ENCODE measurements at regions of chr7 and their contacts with region 1.

Region 1: GRCh38 chr7:30348083-30348560 is 63.7 kb downstream of the ZNRF2 start:
- DNase-seq: peak in 13 of 14 experiments; percentile 12 to 93 (median 35)
- ATAC-seq: peak; percentile 88
- H3K4me3 ChIP-seq: peak overlapping the region; percentile 24
- H3K4me3 Mint-ChIP-seq: peak overlapping the region; percentile 31
- H3K27ac ChIP-seq: peak overlapping the region; percentile 7 to 20
- H3K27ac Mint-ChIP-seq: peak overlapping the region; percentile 93
- H3K4me1 ChIP-seq: peaks cover 14% of the 10 kb centered on the region
- H3K4me1 Mint-ChIP-seq: peaks cover 64% of the 10 kb centered on the region
- H3K27me3 ChIP-seq: no peaks in the 10 kb centered on the region
- H3K27me3 Mint-ChIP-seq: no peaks in the 10 kb centered on the region
- CTCF ChIP-seq: no peak

Region 2: GRCh38 chr7:30134611-30135545 is 213.2 kb before region 1 on chr7 and contains the start of gene MTURN:
- CTCF ChIA-PET with region 1: no interaction called
- POLR2A ChIA-PET with region 1: interaction called, 6 read pairs
- intact Hi-C with region 1: loop called in 1 of 2 experiments (anchors 10 kb)
- DNase-seq: peak; percentile 64 to 96 (median 83)
- ATAC-seq: peak; percentile 76
- H3K4me3 ChIP-seq: peak within 1 kb of the TSS; percentile 94
- H3K4me3 Mint-ChIP-seq: peak within 1 kb of the TSS; percentile 94
- H3K27ac ChIP-seq: no peak within 1 kb of the TSS
- H3K27ac Mint-ChIP-seq: peak within 1 kb of the TSS; percentile 89
- H3K4me1 ChIP-seq: peaks cover 20% of the 10 kb centered on the region
- H3K4me1 Mint-ChIP-seq: peaks cover 20% of the 10 kb centered on the region
- H3K27me3 ChIP-seq: no peaks in the 10 kb centered on the region
- H3K27me3 Mint-ChIP-seq: peaks cover 6% of the 10 kb centered on the region
- CTCF ChIP-seq: no peak
- total RNA-seq, gene MTURN: 38.4 to 38.9 TPM

Region 3: DNA sequence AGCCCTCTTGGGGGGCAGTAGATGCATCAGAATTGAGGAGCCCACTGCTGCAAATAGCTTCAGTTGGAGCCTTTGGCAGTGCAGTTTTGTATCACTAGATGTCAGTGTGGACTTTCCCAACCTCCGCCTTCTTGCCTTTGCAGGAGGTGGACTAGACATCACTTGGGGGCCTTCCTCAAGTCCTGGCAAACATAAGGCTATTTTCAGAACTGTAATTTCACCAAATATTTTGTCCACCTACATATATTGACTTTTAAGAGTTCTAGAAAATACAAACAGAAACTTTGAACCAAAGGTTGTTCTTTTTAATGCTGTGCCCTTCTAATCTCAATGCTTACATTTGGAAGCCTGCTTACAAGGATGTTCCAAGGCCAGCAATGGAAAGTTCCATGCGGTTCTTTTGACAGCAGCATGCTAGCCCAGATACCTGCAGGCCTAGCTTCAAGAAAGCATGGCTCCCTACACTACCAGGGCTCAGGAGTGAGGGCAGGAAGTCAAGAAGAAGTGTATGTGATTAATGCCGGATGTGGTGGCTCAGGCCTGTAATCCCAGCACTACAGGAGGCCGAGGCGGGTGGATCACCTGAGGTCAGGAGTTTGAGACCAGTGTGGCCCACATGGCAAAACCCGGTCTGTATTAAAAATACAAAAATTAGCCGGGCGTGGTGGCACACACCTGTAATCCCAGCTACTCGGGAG is 71.8 kb before region 1 on chr7:
- CTCF ChIA-PET with region 1: interaction called, 10 read pairs
- POLR2A ChIA-PET with region 1: interaction called, 7 read pairs
- intact Hi-C with region 1: loop called (anchors 2 kb)
- DNase-seq: peak; percentile 33 to 78 (median 40)
- ATAC-seq: peak; percentile 86
- H3K4me3 ChIP-seq: no peak overlapping the region
- H3K4me3 Mint-ChIP-seq: no peak overlapping the region
- H3K27ac ChIP-seq: no peak overlapping the region
- H3K27ac Mint-ChIP-seq: no peak overlapping the region
- H3K4me1 ChIP-seq: peaks cover 6% of the 10 kb centered on the region
- H3K4me1 Mint-ChIP-seq: no peaks in the 10 kb centered on the region
- H3K27me3 ChIP-seq: no peaks in the 10 kb centered on the region
- H3K27me3 Mint-ChIP-seq: no peaks in the 10 kb centered on the region
- CTCF ChIP-seq: peak; percentile 75

Region 4: GRCh38 chr7:30308389-30308788 is 39.7 kb before region 1 on chr7:
- CTCF ChIA-PET with region 1: interaction called, 4 read pairs
- POLR2A ChIA-PET with region 1: interaction called, 3 read pairs
- intact Hi-C with region 1: loop called in 1 of 2 experiments (anchors 5 kb)
- DNase-seq: peak in 1 of 14 experiments; percentile 20
- ATAC-seq: no peak
- H3K4me3 ChIP-seq: no peak overlapping the region
- H3K4me3 Mint-ChIP-seq: no peak overlapping the region
- H3K27ac ChIP-seq: no peak overlapping the region
- H3K27ac Mint-ChIP-seq: no peak overlapping the region
- H3K4me1 ChIP-seq: peaks cover 6% of the 10 kb centered on the region
- H3K4me1 Mint-ChIP-seq: peaks cover 80% of the 10 kb centered on the region
- H3K27me3 ChIP-seq: no peaks in the 10 kb centered on the region
- H3K27me3 Mint-ChIP-seq: no peaks in the 10 kb centered on the region
- CTCF ChIP-seq: no peak

Region 5: DNA sequence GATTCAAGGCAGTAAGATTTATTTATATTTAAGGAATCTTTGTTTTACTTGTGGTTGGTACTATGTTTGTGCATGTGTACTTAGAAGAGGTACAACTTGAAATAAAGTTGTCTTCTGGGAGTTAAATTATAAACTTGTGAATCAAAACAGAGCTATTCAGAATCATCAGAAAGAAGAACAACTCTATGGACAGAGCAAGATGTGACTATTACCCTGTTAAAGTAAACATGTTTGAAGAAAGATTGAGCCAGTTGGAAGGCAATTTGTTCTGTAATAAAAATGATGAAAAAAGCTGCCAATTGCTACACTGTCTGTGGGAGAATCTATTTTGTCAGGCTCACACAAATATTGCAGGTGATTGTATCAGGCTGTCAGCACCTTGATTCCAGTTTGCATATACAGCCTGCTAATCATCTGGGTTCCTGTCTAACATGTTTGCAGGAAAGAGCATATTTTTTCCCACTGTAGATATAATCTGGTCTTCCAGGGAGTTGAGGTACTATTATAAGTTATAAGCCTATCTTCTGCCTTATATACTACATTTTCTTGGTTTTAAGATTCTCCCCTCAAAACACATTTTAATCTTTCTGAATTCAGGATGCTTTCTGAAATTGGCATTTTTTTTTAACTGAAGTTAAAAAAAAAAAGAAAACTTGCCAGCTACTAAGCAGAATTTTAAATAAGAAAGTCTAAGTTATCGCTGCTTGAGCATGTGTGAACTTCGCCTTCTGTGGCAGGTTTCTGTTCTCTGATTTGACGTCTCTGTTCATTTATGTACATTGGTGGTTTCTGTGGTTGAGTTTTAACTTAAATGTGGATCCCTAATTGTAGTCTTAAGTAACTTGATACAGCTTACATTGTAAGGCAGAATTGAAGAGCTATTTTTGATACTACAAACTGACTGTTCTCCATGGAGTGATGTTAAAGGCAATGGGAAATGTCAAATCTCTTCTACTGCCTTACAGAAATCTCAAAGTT is 17.7 kb before region 1 on chr7:
- CTCF ChIA-PET with region 1: interaction called, 4 read pairs
- POLR2A ChIA-PET with region 1: interaction called, 14 read pairs
- intact Hi-C with region 1: loop called (anchors 1 to 2 kb)
- DNase-seq: peak in 6 of 14 experiments; percentile 13 to 88 (median 52)
- ATAC-seq: peak; percentile 89
- H3K4me3 ChIP-seq: peak overlapping the region; percentile 11
- H3K4me3 Mint-ChIP-seq: peak overlapping the region; percentile 48
- H3K27ac ChIP-seq: peak overlapping the region in 1 of 2 donors; percentile 12
- H3K27ac Mint-ChIP-seq: peak overlapping the region; percentile 60
- H3K4me1 ChIP-seq: peaks cover 3% of the 10 kb centered on the region
- H3K4me1 Mint-ChIP-seq: peaks cover 72% of the 10 kb centered on the region
- H3K27me3 ChIP-seq: no peaks in the 10 kb centered on the region
- H3K27me3 Mint-ChIP-seq: no peaks in the 10 kb centered on the region
- CTCF ChIP-seq: no peak

Region 6: DNA sequence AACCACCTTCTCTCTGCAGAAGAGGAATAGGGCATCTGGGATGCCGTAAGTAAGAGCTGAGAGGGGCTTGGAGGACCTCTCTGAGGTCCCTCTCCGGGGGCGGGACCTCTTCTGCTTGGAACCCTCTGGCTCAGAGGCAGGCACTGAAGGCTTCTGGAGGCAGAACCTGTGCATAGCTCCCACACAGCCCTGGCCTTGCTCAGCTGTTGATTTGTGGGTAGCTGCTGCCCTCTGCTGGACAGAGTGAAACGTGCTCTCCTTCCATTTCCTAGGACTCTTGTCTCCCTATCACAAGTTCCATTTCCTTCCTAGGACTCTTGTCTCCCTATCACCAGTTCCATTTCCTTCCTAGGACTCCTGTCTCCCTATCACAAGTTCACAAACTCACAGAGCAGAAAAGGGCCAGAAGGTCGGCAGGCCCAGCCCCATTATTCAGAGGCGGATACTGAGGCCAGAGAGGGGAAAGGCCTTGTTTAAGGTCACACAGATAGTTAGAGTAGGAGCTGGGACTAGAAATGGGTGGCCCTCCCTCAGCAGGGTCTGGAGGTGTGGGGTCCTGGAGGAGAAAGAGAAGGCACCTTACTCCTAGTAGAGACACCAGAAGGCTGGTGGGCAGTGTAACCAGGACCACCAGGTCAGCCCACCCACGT is 216.2 kb after region 1 on chr7:
- CTCF ChIA-PET with region 1: no interaction called
- POLR2A ChIA-PET with region 1: no interaction called
- intact Hi-C with region 1: loop called in 1 of 2 experiments (anchors 10 kb)
- DNase-seq: peak; percentile 65 to 87 (median 71)
- ATAC-seq: peak; percentile 96
- H3K4me3 ChIP-seq: no peak overlapping the region
- H3K4me3 Mint-ChIP-seq: no peak overlapping the region
- H3K27ac ChIP-seq: no peak overlapping the region
- H3K27ac Mint-ChIP-seq: no peak overlapping the region
- H3K4me1 ChIP-seq: no peaks in the 10 kb centered on the region
- H3K4me1 Mint-ChIP-seq: no peaks in the 10 kb centered on the region
- H3K27me3 ChIP-seq: no peaks in the 10 kb centered on the region
- H3K27me3 Mint-ChIP-seq: no peaks in the 10 kb centered on the region
- CTCF ChIP-seq: peak; percentile 83